Activated CD4-positive, alpha-beta T cell treated with anti-CD3 and anti-CD28 coated beads for 36 hours (primary cell): ENCODE measurements at regions of chr1 and their contacts with region 1.

Region 1: GRCh38 chr1:225999227-225999911 is at the start of gene SDE2:
- DNase-seq: peak; percentile 100
- ATAC-seq: peak; percentile 90
- H3K4me3 Mint-ChIP-seq: peak within 1 kb of the TSS; percentile 89
- H3K27ac Mint-ChIP-seq: peak within 1 kb of the TSS; percentile 100
- H3K4me1 Mint-ChIP-seq: peaks cover 69% of the 10 kb centered on the region
- H3K27me3 Mint-ChIP-seq: no peaks in the 10 kb centered on the region
- total RNA-seq, gene SDE2: 13.5 to 15.0 TPM

Region 2: GRCh38 chr1:225277445-225277844 is 721.9 kb before region 1 on chr1:
- CTCF ChIA-PET with region 1: no interaction called
- POLR2A ChIA-PET with region 1: no interaction called
- intact Hi-C with region 1: no loop called
- DNase-seq: no peak
- ATAC-seq: no peak
- H3K4me3 Mint-ChIP-seq: no peak overlapping the region
- H3K27ac Mint-ChIP-seq: no peak overlapping the region
- H3K4me1 Mint-ChIP-seq: no peaks in the 10 kb centered on the region
- H3K27me3 Mint-ChIP-seq: peaks cover 18% of the 10 kb centered on the region

Region 3: DNA sequence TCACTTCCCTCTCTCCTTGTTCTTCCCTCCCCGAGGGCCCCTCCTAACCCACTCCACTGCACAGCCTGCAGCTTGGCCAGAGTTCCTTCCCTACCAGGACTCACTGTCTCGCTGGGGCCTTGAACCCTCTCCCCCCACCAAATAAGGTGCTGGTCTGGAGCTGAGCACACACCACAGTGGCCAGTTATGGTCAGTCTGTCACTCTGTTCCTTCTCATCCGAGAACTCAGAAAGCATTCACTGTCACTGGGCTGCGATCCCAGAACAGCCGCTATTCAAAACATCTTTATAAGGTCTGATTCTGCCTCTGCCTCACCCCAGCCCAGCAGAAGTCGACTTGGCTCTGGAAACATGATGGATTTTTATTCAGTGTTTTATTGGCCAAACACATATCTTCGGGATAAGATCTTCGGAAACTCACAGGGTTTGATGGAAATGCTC is 551.7 kb before region 1 on chr1:
- CTCF ChIA-PET with region 1: no interaction called
- POLR2A ChIA-PET with region 1: interaction called, 4 read pairs
- intact Hi-C with region 1: loop called in 1 of 2 experiments (anchors 1 kb)
- DNase-seq: peak; percentile 1
- ATAC-seq: no peak
- H3K4me3 Mint-ChIP-seq: no peak overlapping the region
- H3K27ac Mint-ChIP-seq: peak overlapping the region; percentile 21
- H3K4me1 Mint-ChIP-seq: peaks cover 55% of the 10 kb centered on the region
- H3K27me3 Mint-ChIP-seq: no peaks in the 10 kb centered on the region

Region 4: DNA sequence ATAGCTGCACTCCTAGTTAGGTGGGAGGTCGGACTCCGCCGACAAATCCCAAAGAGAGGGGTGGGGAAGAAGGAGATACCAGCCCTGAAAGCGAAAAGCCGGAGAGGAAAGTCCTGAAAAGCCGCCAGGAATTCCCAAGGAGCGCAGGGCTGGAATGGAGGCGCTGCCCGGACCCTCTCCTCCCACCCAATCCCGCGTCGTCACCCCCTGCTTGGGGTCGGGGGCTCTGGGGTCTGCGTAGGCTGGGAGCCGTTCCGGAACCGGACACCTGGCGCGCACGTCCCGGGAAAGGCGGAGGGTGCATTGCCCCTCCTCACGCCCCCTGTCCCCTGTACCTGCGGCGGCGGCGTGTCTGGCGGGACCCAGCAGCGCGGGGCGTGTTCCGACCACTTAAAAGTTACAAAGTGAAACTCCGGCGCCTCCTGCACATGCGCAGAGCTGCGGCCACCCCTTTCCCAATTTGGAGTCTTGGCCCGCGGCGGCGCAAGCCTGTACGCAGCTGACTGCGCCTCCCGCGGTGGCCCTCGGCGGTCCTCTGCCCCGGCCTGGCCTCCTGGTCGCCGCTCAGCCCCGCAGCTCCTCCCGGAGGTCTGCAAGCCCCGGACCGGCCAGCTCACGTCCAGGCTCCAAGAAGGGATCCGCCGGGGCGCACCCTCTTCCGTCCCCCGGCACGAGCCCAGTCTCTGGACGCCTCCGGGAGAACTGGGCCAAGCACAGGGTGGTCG is 117.2 kb before region 1 on chr1 and contains the start of gene TMEM63A:
- CTCF ChIA-PET with region 1: interaction called, 3 read pairs
- POLR2A ChIA-PET with region 1: no interaction called
- intact Hi-C with region 1: loop called in 1 of 2 experiments (anchors 1 kb)
- DNase-seq: peak; percentile 92
- ATAC-seq: peak; percentile 55
- H3K4me3 Mint-ChIP-seq: peak within 1 kb of the TSS; percentile 89
- H3K27ac Mint-ChIP-seq: peak within 1 kb of the TSS; percentile 91
- H3K4me1 Mint-ChIP-seq: peaks cover 50% of the 10 kb centered on the region
- H3K27me3 Mint-ChIP-seq: no peaks in the 10 kb centered on the region
- total RNA-seq, gene TMEM63A: 47.3 to 48.0 TPM

Region 5: GRCh38 chr1:225915538-225915991 is 83.8 kb before region 1 on chr1:
- CTCF ChIA-PET with region 1: no interaction called
- POLR2A ChIA-PET with region 1: no interaction called
- intact Hi-C with region 1: no loop called
- DNase-seq: no peak
- ATAC-seq: no peak
- H3K4me3 Mint-ChIP-seq: no peak overlapping the region
- H3K27ac Mint-ChIP-seq: no peak overlapping the region
- H3K4me1 Mint-ChIP-seq: peaks cover 26% of the 10 kb centered on the region
- H3K27me3 Mint-ChIP-seq: no peaks in the 10 kb centered on the region

Region 6: GRCh38 chr1:226083302-226084101 is 84.1 kb after region 1 on chr1:
- CTCF ChIA-PET with region 1: no interaction called
- POLR2A ChIA-PET with region 1: interaction called, 4 read pairs
- intact Hi-C with region 1: loop called in 1 of 2 experiments (anchors 1 kb)
- DNase-seq: peak; percentile 94
- ATAC-seq: peak; percentile 92
- H3K4me3 Mint-ChIP-seq: peak overlapping the region; percentile 75
- H3K27ac Mint-ChIP-seq: peak overlapping the region; percentile 65
- H3K4me1 Mint-ChIP-seq: peaks cover 9% of the 10 kb centered on the region
- H3K27me3 Mint-ChIP-seq: no peaks in the 10 kb centered on the region

Region 7: DNA sequence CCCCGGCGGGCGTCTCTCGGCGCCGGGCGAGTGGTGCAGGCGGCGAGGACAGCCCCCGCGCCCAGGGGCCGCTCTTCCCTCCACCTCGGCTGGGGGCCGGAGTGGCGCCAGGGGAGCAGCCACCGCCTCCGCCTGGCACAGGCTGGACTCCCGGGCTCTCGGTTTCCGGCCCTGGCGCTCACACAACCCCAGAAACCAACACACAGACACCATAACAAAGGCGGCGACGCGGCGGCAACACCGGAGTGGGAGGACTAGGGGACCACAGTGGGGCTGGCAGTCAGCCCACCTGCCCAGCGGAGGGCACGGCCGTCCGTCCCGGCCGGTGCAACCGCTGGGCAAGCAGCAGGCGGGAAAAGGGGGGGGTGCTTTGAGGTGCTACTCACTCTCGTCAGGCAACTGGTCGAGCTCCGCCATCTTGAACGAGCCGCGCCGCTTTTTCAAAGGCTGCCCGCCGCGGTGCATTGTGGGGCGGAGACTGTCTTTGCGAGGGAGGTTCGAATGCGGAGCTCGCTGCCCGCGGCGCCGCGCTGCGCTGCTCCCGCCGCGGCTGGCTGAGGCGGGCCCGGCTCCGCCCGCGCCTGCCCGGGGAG is 309.4 kb after region 1 on chr1 and contains the start of gene LIN9:
- CTCF ChIA-PET with region 1: no interaction called
- POLR2A ChIA-PET with region 1: interaction called, 4 read pairs
- intact Hi-C with region 1: loop called in 1 of 2 experiments (anchors 5 kb)
- DNase-seq: peak; percentile 97
- ATAC-seq: peak; percentile 87
- H3K4me3 Mint-ChIP-seq: peak within 1 kb of the TSS; percentile 83
- H3K27ac Mint-ChIP-seq: peak within 1 kb of the TSS; percentile 86
- H3K4me1 Mint-ChIP-seq: peaks cover 15% of the 10 kb centered on the region
- H3K27me3 Mint-ChIP-seq: peaks cover 10% of the 10 kb centered on the region
- total RNA-seq, gene LIN9: 10.6 TPM